SK-N-SH (cell line): ENCODE measurements at regions of chr19 and their contacts with region 1.

Region 1: DNA sequence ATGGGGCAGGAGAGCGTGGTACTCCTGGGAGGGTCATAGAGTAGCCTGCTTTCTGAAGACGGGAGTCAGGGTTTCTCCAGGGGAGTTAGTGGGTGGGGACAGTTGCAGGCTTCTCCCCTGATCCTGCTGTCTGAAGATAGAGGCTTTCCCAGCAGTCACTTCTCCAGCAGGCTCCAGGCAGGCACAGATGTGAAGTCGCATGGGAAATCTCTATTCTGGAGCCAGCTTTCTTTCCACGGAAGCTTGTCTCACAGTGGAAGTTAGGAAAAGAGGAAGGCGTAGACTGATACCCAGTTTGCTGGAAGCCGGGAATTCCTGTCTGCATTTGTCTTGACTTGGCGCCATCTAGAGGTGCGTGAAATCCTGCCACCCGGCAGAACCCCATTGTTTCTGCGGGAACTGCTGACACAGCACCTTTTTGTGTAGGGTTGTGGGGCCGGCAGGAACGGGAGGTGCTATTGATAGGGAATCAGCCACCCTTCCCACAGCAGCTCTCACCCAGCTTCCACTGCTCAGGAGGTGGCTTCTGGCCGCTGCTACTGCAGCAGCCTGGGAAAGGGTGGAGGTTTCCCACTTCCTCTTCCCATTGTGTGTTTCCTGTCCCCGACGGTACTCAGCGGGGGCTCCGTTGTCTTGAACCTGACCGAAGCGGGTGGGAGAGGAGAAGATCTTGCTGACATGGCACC is 28.5 kb upstream of the NPAS1 start:
- DNase-seq: peak; percentile 85
- H3K4me3 ChIP-seq: no peak overlapping the region; a peak in 1 of 4 replicates
- H3K27ac ChIP-seq: peak overlapping the region; percentile 32 to 34; a peak in 2 of 4 replicates
- H3K4me1 ChIP-seq: peaks cover 6 to 8% of the 10 kb centered on the region in 2 experiments; a peak in 3 of 4 replicates
- H3K27me3 ChIP-seq: no peaks in the 10 kb centered on the region
- CTCF ChIP-seq: peak; percentile 89
- EP300 ChIP-seq: no peak; a peak in 1 of 4 replicates
- RAD21 ChIP-seq: peak; percentile 96

Region 2: GRCh38 chr19:46856050-46857022 is 134.8 kb before region 1 on chr19:
- CTCF ChIA-PET with region 1: interaction called, 126 read pairs
- POLR2A ChIA-PET with region 1: interaction called, 3 read pairs
- DNase-seq: peak; percentile 88
- H3K4me3 ChIP-seq: peak overlapping the region in 1 of 2 experiments; percentile 31; a peak in 2 of 4 replicates
- H3K27ac ChIP-seq: peak overlapping the region; percentile 4 to 21; a peak in 2 of 4 replicates
- H3K4me1 ChIP-seq: peaks cover 0 to 5% of the 10 kb centered on the region in 2 experiments; a peak in 2 of 4 replicates
- H3K27me3 ChIP-seq: no peaks in the 10 kb centered on the region
- CTCF ChIP-seq: peak; percentile 85
- EP300 ChIP-seq: no peak
- RAD21 ChIP-seq: peak; percentile 93

Region 3: DNA sequence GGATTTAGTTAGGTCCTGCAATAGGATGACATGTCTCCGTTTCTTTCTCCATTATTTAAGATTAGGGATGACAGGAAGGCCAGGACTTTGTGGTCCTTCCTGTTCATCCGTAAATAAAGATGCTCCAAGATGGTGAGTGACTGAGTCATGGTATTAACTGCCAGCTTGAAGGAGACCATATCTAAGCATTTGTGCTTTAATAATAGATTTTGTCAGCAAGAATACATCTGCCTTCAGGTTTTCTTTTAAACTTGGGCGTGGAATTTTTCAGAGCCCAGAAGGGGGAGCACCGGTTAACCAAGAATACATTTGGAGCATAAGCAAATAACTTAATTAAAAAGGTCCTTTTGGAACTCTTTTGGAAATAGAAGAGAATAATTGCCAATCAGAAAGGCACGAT is 62.2 kb before region 1 on chr19:
- CTCF ChIA-PET with region 1: interaction called, 11 read pairs
- POLR2A ChIA-PET with region 1: no interaction called
- DNase-seq: no peak
- H3K4me3 ChIP-seq: no peak overlapping the region; a peak in 1 of 4 replicates
- H3K27ac ChIP-seq: peak overlapping the region; percentile 58 to 67
- H3K4me1 ChIP-seq: peaks cover 16 to 68% of the 10 kb centered on the region in 2 experiments
- H3K27me3 ChIP-seq: no peaks in the 10 kb centered on the region
- CTCF ChIP-seq: peak; percentile 54
- EP300 ChIP-seq: peak; percentile 53 to 55; a peak in 3 of 4 replicates
- RAD21 ChIP-seq: peak; percentile 30

Region 4: GRCh38 chr19:46970815-46971214 is 20.3 kb before region 1 on chr19:
- CTCF ChIA-PET with region 1: interaction called, 17 read pairs
- POLR2A ChIA-PET with region 1: no interaction called
- DNase-seq: no peak
- H3K4me3 ChIP-seq: no peak overlapping the region
- H3K27ac ChIP-seq: peak overlapping the region in 1 of 2 experiments; percentile 72; a peak in 2 of 4 replicates
- H3K4me1 ChIP-seq: peaks cover 7 to 30% of the 10 kb centered on the region in 2 experiments
- H3K27me3 ChIP-seq: no peaks in the 10 kb centered on the region
- CTCF ChIP-seq: no peak
- EP300 ChIP-seq: no peak
- RAD21 ChIP-seq: no peak

Region 5: GRCh38 chr19:47002107-47002766 is 11.1 kb after region 1 on chr19:
- CTCF ChIA-PET with region 1: interaction called, 49 read pairs
- POLR2A ChIA-PET with region 1: interaction called, 4 read pairs
- DNase-seq: no peak
- H3K4me3 ChIP-seq: no peak overlapping the region
- H3K27ac ChIP-seq: no peak overlapping the region
- H3K4me1 ChIP-seq: peaks cover 0 to 9% of the 10 kb centered on the region in 2 experiments; a peak in 1 of 4 replicates
- H3K27me3 ChIP-seq: no peaks in the 10 kb centered on the region
- CTCF ChIP-seq: no peak
- EP300 ChIP-seq: no peak
- RAD21 ChIP-seq: no peak

Region 6: GRCh38 chr19:47047763-47048405 is 56.8 kb after region 1 on chr19:
- CTCF ChIA-PET with region 1: no interaction called
- POLR2A ChIA-PET with region 1: no interaction called
- DNase-seq: peak; percentile 98
- H3K4me3 ChIP-seq: peak overlapping the region; percentile 81 to 86
- H3K27ac ChIP-seq: peak overlapping the region in 1 of 2 experiments; percentile 70; a peak in 2 of 4 replicates
- H3K4me1 ChIP-seq: peaks cover 4 to 5% of the 10 kb centered on the region in 2 experiments; a peak in 2 of 4 replicates
- H3K27me3 ChIP-seq: no peaks in the 10 kb centered on the region
- CTCF ChIP-seq: no peak
- EP300 ChIP-seq: no peak
- RAD21 ChIP-seq: no peak